CD8-positive, alpha-beta T cell (primary cell): ENCODE measurements at regions of chr11 and their contacts with region 1.

Region 1: GRCh38 chr11:14789879-14790484 is 102.0 kb downstream of the CYP2R1 start:
- DNase-seq: peak in 2 of 9 experiments; percentile 35 to 54
- ATAC-seq: no peak
- H3K4me3 ChIP-seq: no peak overlapping the region
- H3K4me3 Mint-ChIP-seq: no peak overlapping the region
- H3K27ac ChIP-seq: no peak overlapping the region
- H3K27ac Mint-ChIP-seq: peak overlapping the region; percentile 79
- H3K4me1 ChIP-seq: peaks cover 2% of the 10 kb centered on the region
- H3K4me1 Mint-ChIP-seq: peaks cover 31% of the 10 kb centered on the region
- H3K27me3 ChIP-seq: no peaks in the 10 kb centered on the region
- H3K27me3 Mint-ChIP-seq: no peaks in the 10 kb centered on the region
- CTCF ChIP-seq: peak; percentile 68

Region 2: GRCh38 chr11:14386895-14387480 is 403.0 kb before region 1 on chr11:
- CTCF ChIA-PET with region 1: no interaction called
- POLR2A ChIA-PET with region 1: no interaction called
- intact Hi-C with region 1: no loop called
- DNase-seq: peak in 2 of 9 experiments; percentile 17 to 25
- ATAC-seq: no peak
- H3K4me3 ChIP-seq: no peak overlapping the region
- H3K4me3 Mint-ChIP-seq: no peak overlapping the region
- H3K27ac ChIP-seq: no peak overlapping the region
- H3K27ac Mint-ChIP-seq: no peak overlapping the region
- H3K4me1 ChIP-seq: no peaks in the 10 kb centered on the region
- H3K4me1 Mint-ChIP-seq: no peaks in the 10 kb centered on the region
- H3K27me3 ChIP-seq: no peaks in the 10 kb centered on the region
- H3K27me3 Mint-ChIP-seq: no peaks in the 10 kb centered on the region
- CTCF ChIP-seq: no peak

Region 3: DNA sequence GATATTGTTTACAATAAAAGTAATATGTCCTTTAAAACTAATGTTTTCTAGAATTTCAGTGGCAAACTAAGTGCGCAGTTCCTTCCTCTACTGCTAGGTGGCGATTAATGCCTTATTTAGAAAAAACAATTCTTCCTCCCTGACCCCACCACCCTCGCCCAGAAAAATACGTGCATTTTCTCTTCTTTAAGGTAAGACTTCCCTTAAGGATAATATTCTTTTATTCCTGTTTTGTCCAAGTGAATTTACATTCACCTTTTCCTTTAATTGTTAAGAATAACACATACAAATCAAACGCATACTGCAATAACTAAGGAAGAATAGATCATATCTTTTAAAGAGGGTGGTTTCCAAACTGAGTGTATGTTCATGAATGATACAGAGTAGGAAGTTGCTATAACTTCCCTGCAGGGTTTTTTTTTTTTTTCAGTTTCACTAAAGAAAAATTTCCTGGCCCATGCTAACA is 252.8 kb before region 1 on chr11:
- CTCF ChIA-PET with region 1: interaction called, 5 read pairs
- POLR2A ChIA-PET with region 1: no interaction called
- intact Hi-C with region 1: loop called in 1 of 2 experiments (anchors 5 kb)
- DNase-seq: peak; percentile 19 to 76 (median 50)
- ATAC-seq: peak; percentile 85
- H3K4me3 ChIP-seq: no peak overlapping the region
- H3K4me3 Mint-ChIP-seq: peak overlapping the region; percentile 77
- H3K27ac ChIP-seq: peak overlapping the region in 1 of 2 experiments; percentile 25
- H3K27ac Mint-ChIP-seq: peak overlapping the region; percentile 87
- H3K4me1 ChIP-seq: peaks cover 15% of the 10 kb centered on the region
- H3K4me1 Mint-ChIP-seq: peaks cover 38% of the 10 kb centered on the region
- H3K27me3 ChIP-seq: no peaks in the 10 kb centered on the region
- H3K27me3 Mint-ChIP-seq: no peaks in the 10 kb centered on the region
- CTCF ChIP-seq: peak; percentile 92

Region 4: GRCh38 chr11:14751975-14752407 is 38.0 kb before region 1 on chr11:
- CTCF ChIA-PET with region 1: no interaction called
- POLR2A ChIA-PET with region 1: no interaction called
- intact Hi-C with region 1: loop called in 1 of 2 experiments (anchors 5 kb)
- DNase-seq: no peak
- ATAC-seq: peak; percentile 39
- H3K4me3 ChIP-seq: no peak overlapping the region
- H3K4me3 Mint-ChIP-seq: peak overlapping the region; percentile 40
- H3K27ac ChIP-seq: no peak overlapping the region
- H3K27ac Mint-ChIP-seq: peak overlapping the region; percentile 83
- H3K4me1 ChIP-seq: peaks cover 52% of the 10 kb centered on the region
- H3K4me1 Mint-ChIP-seq: peaks cover 63% of the 10 kb centered on the region
- H3K27me3 ChIP-seq: no peaks in the 10 kb centered on the region
- H3K27me3 Mint-ChIP-seq: no peaks in the 10 kb centered on the region
- CTCF ChIP-seq: no peak

Region 5: GRCh38 chr11:14886513-14886912 is 96.5 kb after region 1 on chr11:
- CTCF ChIA-PET with region 1: no interaction called
- POLR2A ChIA-PET with region 1: no interaction called
- intact Hi-C with region 1: loop called in 1 of 2 experiments (anchors 5 kb)
- DNase-seq: no peak
- ATAC-seq: no peak
- H3K4me3 ChIP-seq: no peak overlapping the region
- H3K4me3 Mint-ChIP-seq: no peak overlapping the region
- H3K27ac ChIP-seq: no peak overlapping the region
- H3K27ac Mint-ChIP-seq: peak overlapping the region; percentile 10
- H3K4me1 ChIP-seq: peaks cover 10% of the 10 kb centered on the region
- H3K4me1 Mint-ChIP-seq: peaks cover 55% of the 10 kb centered on the region
- H3K27me3 ChIP-seq: no peaks in the 10 kb centered on the region
- H3K27me3 Mint-ChIP-seq: no peaks in the 10 kb centered on the region
- CTCF ChIP-seq: no peak

Region 6: DNA sequence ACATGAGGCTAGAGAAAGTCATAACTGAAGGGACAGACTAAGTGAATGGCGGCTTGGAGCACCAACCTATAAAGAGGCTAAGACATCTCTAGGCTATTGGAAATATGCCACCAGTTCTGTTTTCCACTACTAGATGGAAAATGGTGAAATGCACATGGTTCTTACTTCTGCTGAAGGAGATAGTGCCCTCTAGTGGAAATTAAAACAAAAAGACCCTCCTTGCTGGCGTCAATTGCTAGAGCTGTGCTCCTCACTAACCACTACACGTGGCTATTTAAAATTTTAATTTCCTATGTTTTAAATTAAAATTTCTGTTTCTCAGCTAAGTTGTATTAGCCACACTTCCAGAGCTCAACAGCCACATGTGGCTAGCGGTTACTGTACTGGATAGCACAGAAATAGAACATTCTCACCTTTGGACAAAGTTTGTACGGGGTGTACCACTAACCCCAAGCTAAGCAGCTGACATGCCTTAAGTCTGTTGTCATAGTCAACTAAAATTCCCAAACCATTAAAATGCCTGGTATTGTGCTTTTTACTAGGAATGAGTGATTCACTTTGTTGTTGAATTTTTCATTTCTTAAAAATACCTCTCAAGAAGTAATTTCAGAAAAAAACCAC is 216.3 kb after region 1 on chr11:
- CTCF ChIA-PET with region 1: interaction called, 10 read pairs
- POLR2A ChIA-PET with region 1: no interaction called
- intact Hi-C with region 1: loop called (anchors 5 kb)
- DNase-seq: peak in 3 of 9 experiments; percentile 13 to 61 (median 50)
- ATAC-seq: peak; percentile 34
- H3K4me3 ChIP-seq: no peak overlapping the region
- H3K4me3 Mint-ChIP-seq: no peak overlapping the region
- H3K27ac ChIP-seq: no peak overlapping the region
- H3K27ac Mint-ChIP-seq: no peak overlapping the region
- H3K4me1 ChIP-seq: no peaks in the 10 kb centered on the region
- H3K4me1 Mint-ChIP-seq: no peaks in the 10 kb centered on the region
- H3K27me3 ChIP-seq: no peaks in the 10 kb centered on the region
- H3K27me3 Mint-ChIP-seq: peaks cover 34% of the 10 kb centered on the region
- CTCF ChIP-seq: peak; percentile 56

Region 7: GRCh38 chr11:15074206-15075161 is 284.5 kb after region 1 on chr11:
- CTCF ChIA-PET with region 1: interaction called, 3 read pairs
- POLR2A ChIA-PET with region 1: no interaction called
- intact Hi-C with region 1: loop called (anchors 2 kb)
- DNase-seq: peak; percentile 64 to 89 (median 80)
- ATAC-seq: peak; percentile 91
- H3K4me3 ChIP-seq: peak overlapping the region; percentile 39 to 60
- H3K4me3 Mint-ChIP-seq: peak overlapping the region; percentile 84
- H3K27ac ChIP-seq: no peak overlapping the region
- H3K27ac Mint-ChIP-seq: no peak overlapping the region
- H3K4me1 ChIP-seq: peaks cover 18% of the 10 kb centered on the region
- H3K4me1 Mint-ChIP-seq: peaks cover 12% of the 10 kb centered on the region
- H3K27me3 ChIP-seq: peaks cover 9 to 16% of the 10 kb centered on the region in 2 experiments
- H3K27me3 Mint-ChIP-seq: peaks cover 27% of the 10 kb centered on the region
- CTCF ChIP-seq: peak; percentile 79

Region 8: DNA sequence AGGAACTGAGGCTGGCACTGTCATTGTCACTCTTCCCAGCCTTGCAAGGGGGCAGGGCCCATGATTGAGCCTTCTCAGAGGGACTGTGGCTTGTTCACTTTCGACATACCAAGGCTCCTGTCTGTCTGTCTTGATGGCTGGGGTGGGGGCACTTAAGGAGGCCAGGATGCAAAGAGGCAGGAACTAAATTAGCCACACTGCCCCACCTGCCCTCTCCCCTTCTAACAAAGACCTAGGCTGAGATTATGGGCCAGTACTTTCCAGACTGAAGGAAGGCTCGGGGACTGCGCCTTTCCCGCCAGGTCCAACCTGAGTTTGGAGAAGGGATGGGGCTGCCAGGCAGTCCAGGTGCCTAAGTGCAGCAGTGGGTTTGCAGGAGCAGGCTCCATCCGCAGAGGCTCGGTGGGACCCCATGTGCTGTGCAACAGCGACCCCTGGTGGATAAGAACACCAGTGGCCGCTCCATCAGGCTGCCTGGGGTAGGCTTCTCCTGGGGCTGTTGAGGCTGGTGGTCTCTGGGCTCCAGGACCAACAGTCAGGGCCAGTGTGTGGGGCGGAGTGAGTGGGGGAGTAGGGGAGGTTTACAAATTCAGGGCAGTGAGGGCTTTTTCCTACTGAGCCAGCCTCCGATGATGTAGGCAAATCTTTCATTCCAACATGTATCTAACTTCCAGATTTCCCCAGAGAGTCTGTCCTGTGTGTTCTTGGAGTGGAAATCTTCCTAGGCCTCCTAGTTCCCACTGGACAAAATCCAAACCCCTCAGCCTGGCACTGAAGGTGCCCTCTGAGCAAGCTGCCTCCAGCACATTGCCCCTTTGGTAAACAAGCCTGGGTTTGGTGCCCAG is 418.6 kb after region 1 on chr11:
- CTCF ChIA-PET with region 1: no interaction called
- POLR2A ChIA-PET with region 1: no interaction called
- intact Hi-C with region 1: loop called in 1 of 2 experiments (anchors 5 kb)
- DNase-seq: peak; percentile 53 to 85 (median 73)
- ATAC-seq: peak; percentile 73
- H3K4me3 ChIP-seq: no peak overlapping the region
- H3K4me3 Mint-ChIP-seq: no peak overlapping the region
- H3K27ac ChIP-seq: no peak overlapping the region
- H3K27ac Mint-ChIP-seq: no peak overlapping the region
- H3K4me1 ChIP-seq: no peaks in the 10 kb centered on the region
- H3K4me1 Mint-ChIP-seq: no peaks in the 10 kb centered on the region
- H3K27me3 ChIP-seq: no peaks in the 10 kb centered on the region
- H3K27me3 Mint-ChIP-seq: peaks cover 3% of the 10 kb centered on the region
- CTCF ChIP-seq: peak; percentile 75